ENCODE measurements at regions of chr6 and their contacts with region 1.

Region 1: DNA sequence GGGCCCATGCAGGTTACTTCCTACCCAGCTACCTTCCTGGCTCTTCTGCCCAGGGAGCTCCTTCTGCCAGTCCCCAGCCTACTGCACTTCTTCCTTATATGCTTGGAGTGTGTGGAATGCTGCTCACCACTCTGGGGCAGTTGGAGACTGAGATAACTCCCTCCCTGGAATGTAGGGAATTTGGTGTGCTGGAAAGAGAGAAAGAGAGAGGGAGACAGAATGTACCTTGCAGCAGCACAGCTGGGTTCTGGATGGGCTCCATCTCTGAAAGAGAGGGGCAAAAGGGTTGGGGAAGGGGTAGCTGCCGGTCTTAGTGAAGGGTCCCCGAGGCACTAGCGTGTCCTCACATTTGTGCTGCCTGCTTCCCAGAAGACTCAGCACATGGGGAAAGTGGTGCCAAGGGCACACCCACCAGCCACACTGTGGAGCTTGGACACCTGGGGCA is 40.2 kb upstream of the DDR1 start:
- DNase-seq: no peak
- H3K4me3 ChIP-seq: no peak overlapping the region
- H3K27me3 ChIP-seq: no peaks in the 10 kb centered on the region; the same call in 1 of the 2 replicates
- CTCF ChIP-seq: 0 out of 2 replicates have a peak, but pooled peaks have one; percentile 21

Region 2: DNA sequence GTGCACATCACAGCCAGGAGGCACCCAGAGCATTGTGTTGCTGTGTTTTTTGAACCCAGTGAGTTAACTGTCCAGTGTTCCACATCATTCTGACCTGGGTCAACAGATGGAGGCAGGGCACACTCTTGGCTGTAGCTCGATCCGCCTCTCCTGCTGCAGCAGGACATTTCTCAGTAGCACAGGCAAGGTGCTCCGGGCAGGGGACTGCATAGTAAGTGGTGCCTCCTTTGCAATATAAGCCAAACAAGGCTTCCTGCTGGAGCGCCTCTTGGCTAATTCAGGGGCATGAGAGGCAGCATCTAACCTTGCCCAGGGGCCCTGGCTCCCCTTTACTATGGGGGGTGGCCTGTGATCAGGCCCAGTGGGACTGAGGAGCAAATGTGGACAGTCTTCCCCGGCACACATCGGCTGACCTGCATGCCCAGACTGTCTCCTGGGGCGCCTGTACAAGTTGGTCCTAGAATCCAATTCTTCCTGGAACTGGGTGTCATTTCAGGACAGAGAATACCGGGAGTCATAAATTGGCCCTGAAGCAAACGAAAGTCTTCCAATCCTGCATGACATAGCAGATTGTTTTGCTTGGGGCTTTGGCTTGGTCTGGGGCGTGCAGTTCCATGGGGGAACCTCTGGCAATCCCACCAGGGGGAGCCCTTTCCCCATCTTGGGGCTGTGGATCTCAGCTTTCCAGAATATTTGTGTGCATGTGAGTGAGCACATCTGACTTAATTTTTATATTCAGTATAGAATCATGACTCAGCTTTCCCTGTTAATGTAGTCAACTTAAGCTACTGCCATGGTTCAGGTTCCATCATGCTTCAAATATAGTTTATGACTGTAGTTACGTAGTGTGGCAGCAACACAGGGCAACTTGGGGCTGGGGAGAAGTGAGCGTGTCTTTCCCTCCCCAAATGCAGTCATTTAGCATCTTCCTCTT is 15.8 kb before region 1 on chr6:
- CTCF ChIA-PET with region 1: interaction called, 16 read pairs
- POLR2A ChIA-PET with region 1: no interaction called
- DNase-seq: peak; percentile 69
- H3K4me3 ChIP-seq: no peak overlapping the region
- H3K27me3 ChIP-seq: no peaks in the 10 kb centered on the region
- CTCF ChIP-seq: peak; percentile 92

Region 3: GRCh38 chr6:30877419-30878371 is 33.6 kb after region 1 on chr6:
- CTCF ChIA-PET with region 1: interaction called, 26 read pairs
- POLR2A ChIA-PET with region 1: interaction called, 13 read pairs
- DNase-seq: peak; percentile 34
- H3K4me3 ChIP-seq: peak overlapping the region; percentile 12; the same call in 1 of the 2 replicates
- H3K27me3 ChIP-seq: no peaks in the 10 kb centered on the region
- CTCF ChIP-seq: peak; percentile 91

Region 4: DNA sequence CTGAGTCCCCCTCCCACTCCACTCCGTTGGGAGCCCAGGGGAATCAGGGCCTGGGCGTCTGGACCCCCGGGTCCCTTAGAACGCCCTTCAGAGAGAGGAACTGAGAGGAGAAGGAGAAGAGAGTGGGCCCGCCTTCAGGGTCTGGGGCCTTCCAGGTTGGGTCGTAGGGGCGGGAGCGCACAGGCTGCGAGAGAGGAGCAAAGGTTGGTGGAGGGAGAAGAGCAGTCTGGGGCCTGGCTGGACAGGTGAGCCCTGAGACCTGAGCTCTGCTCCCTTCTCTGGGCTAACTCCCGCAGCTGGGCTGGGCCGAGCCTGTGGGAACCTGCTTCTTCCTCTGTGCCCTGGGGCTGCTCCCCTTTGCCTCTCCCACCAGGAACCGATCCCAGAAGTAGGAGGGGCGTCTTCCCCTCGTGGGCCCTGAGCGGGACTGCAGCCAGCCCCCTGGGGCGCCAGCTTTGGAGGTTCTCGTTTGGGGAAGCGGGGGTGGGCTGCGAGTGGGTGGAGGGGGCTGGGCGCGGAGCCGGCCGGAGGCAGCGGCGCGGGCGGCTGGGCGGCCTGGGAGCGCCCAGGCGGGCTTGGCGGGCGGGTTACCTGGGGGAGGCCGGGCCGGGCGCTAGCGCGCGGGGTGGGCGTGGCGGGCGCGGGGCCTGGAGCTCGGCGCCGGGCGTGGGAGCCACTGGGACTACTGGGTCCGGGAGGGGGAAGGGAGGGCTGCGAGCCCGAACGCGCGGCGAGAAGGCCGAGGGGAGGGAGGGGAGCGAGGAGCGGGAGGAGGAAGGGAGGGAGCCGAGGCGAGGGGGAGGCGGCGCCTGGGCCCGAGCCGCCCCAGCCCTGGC is 39.8 kb after region 1 on chr6 and contains the start of gene DDR1:
- CTCF ChIA-PET with region 1: interaction called, 26 read pairs
- POLR2A ChIA-PET with region 1: interaction called, 13 read pairs
- DNase-seq: no peak
- H3K4me3 ChIP-seq: peak within 1 kb of the TSS; percentile 60
- H3K27me3 ChIP-seq: no peaks in the 10 kb centered on the region
- CTCF ChIP-seq: no peak
- polyA plus RNA-seq, gene DDR1: 10.6 and 17.0 TPM in 2 replicates

Region 5: DNA sequence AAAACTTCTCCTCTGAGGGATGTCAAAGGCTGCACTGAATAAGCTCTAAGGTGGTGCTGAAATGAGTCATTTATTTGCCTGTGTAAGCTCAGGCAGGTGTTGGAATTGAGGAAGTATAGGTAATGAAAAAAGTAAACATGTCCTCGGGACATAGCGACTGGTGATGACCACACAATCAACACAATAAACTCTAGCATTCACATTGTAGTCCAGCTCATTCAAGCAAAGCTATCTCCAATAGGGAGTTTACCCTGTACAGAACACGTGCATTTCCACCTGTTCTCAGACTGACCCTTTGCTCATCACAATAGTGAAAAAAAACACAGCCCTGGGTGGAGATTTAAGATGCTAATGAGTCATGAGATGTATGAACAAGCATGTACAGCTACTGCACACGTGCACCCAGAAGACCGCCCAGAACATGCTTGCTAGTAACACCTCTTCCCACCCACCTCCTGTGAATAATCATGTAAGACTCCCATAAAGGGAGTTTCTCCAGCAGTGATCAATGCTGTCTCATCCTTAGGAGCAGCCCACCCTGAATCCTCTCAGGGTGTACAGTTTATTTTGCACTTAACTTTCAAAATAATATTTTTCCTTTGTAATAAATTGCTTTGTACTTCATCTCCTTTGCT is 359.3 kb after region 1 on chr6:
- CTCF ChIA-PET with region 1: no interaction called
- POLR2A ChIA-PET with region 1: interaction called, 10 read pairs
- DNase-seq: no peak
- H3K4me3 ChIP-seq: peak overlapping the region; percentile 26
- H3K27me3 ChIP-seq: no peaks in the 10 kb centered on the region
- CTCF ChIP-seq: no peak

Measured in BJ (cell line).